Activated naive CD4-positive, alpha-beta T cell treated with anti-CD3 and anti-CD28 coated beads, Interleukin-2, amount 10 ng/mL, durations not matched to agents 7 days and 5 days (primary cell): ENCODE measurements at regions of chr7 and their contacts with region 1.

Region 1: DNA sequence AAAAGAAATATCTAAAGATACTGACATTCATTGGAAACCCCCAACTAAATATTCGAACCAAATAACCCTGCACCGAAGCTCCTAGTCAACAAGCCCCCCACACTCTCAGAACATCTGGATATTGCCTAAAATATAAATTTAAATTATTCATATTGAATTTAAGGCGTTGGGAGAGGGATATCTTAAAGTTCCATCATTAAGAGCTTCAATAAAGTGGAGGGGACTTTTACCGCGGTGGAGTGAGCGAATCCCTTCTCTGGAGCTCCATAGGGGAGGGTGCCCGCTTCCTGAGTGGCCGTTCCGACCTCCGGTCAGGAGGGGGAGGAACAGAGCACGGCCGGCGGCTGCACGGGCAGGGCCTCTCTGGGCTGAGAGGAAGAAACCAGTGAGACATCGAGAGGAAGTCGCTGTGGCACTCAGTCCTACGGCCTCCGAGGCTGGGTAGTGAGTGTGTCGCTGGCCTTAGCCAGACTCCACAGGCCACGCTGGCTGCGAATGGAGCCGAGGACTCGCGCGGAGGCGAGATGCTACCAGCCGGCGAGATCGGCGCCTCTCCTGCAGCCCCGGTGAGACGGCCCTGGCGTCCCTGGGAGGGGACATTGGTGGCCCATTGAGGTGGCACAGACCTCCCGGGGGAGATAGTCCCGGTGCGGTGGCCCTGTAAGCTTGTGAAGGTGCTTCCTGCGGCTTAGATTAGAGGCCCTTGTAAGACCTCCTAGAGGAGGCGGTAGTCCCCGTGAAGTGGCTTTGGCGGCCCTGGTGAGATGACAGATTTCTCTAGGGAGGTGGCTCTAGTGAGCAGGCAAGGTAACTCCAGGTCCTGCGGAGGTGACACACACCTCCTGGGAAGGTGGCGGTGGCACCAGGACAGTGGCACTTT is at the start of gene RINT1:
- DNase-seq: peak; percentile 91
- H3K4me3 Mint-ChIP-seq: peak within 1 kb of the TSS; percentile 96
- H3K27ac Mint-ChIP-seq: peak within 1 kb of the TSS; percentile 94
- H3K4me1 Mint-ChIP-seq: peaks cover 38% of the 10 kb centered on the region
- H3K27me3 Mint-ChIP-seq: no peaks in the 10 kb centered on the region

Region 2: GRCh38 chr7:105589356-105590077 is 57.5 kb after region 1 on chr7:
- CTCF ChIA-PET with region 1: interaction called, 10 read pairs
- DNase-seq: peak; percentile 75
- H3K4me3 Mint-ChIP-seq: no peak overlapping the region
- H3K27ac Mint-ChIP-seq: peak overlapping the region; percentile 55
- H3K4me1 Mint-ChIP-seq: peaks cover 30% of the 10 kb centered on the region
- H3K27me3 Mint-ChIP-seq: peaks cover 10% of the 10 kb centered on the region